Right ventricle myocardium inferior (tissue), 1 donor: ENCODE measurements at regions of chr10 and their contacts with region 1.

Region 1: DNA sequence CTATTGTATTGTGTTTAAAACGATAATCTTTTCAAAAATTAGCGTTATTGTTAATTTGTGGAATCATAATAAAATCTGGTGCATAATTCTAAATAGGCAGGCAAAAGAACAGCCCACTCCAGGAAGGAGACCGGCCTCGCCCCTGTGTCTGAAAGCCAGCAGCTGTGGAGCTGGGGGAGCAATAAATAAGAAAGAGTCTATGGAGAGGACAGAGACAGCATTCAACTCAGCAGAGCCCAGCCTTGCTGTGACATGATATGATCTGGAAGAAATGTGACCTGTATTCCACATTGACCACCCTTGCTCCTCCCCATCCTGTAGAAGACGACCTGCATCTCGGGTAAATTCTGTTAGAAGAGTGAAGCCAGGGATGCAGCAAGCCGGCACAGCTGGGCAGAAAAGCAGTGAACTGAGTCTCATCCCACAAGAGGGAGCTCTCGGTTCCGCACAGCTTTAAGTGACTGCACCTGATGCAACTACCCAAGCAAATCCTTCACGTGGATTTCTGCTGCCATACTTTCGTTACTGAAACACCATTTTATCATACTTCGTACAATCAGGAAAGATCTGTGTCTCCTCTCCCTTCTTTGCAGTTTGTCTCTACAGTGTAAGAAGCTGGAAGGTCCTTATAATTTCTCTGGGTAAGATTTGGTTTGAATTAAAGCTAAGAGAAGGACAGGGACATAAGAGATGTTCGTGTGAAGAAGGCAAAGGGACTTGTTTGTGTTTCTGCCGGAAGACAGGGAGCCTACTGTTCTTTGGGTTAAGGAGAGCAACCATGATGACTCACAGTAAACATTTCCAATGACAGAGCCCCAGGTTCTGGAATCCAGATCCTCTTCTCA is 427.1 kb downstream of the GPAM start:
- DNase-seq: no peak
- ATAC-seq: no peak

Region 2: DNA sequence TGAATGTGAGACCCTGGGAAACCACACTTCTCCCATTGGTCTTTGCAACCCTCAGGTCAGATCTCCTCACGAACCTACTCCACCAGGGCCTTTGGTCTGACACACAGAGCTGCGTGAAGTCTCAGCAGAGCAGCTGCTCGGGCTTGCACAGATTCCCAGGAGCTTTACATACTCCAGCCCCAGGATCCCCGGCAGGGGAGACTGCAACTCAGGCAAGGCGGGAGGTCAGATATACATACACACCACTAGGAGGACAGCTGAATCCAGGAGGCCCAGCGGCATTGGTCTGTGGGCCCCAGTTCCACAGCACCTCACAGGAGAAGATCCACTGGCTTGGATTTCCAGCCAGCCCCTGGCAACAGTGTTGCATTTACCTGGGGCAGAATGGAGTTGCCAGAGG is 187.9 kb after region 1 on chr10:
- intact Hi-C with region 1: no loop called
- DNase-seq: no peak
- ATAC-seq: no peak

Region 3: DNA sequence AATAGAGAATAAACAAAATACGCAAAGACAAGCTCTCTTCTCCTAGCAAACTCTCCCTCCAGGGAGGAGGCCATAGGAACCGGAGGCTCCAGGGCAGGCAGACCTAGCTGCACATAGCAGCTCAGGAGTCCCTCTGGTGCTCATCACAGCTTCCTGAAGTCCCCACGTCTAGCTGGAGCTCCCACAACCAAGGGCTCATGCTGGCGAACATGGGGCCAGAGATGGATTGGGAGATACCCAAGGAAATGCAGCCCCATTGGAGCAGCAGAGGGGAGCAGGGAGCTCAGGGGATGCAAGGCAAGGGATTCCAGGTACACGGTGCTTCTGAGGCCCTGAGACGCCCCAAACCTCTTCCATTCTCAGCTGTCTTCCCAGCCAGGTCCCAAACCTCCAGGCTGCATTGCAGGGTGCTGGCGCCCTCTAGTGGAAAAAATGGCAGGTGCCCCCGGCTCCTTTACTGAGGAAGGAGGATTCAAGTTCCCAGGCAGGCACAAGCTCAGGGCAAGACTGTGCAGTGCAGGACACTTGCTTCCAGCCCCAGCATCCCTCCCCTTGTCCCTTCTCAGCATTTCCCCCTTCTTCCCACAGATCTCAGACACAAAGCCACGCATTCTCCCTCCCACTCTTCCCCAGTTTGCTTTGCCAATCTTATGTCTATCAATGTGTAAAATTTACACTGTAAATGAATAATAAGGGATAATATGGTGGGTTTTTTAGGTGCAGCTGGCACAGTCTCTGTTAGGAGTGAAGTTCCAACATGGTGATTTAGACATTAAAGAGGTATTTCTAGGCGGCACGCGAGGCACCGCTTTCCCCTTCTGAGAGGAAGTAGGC is 380.9 kb after region 1 on chr10:
- intact Hi-C with region 1: loop called (anchors 10 kb)
- DNase-seq: no peak
- ATAC-seq: peak; percentile 70